Mucosa of descending colon (tissue), 3 donors: ENCODE measurements at regions of chr3 and their contacts with region 1.

Region 1: DNA sequence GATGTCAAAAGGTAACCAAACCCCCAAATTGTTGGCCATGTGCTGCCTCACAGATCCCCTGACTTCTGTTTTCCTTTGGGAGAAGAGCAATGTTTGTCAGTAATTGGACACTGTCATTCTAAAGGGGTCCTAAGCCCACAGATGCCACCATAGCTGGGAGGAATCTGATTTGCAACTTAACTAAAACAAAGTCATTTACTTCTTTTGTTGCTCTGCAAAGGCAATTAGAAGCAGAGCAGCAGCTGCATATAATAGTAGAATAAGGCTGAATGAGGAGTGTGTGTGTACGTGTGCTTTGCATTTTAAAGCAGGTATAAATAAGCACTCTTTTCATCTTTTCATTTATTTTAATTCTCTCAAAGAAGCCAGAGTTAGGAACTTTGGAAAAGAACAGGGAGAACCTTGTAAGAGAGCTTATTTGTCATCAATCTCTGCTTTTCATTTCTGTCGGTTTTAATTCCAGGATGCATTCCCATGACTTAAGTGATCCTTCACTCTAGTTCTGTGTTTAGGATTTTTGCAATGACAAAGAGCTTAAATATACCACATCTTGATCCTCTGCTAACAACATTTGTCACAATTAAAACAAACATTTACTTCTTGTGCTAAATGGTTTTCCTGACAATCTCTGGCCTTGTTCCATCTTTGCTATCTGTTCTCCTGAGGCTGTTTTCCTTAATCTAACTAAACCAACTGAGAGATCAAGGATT is 530.2 kb upstream of the CBLB start:
- DNase-seq: no peak
- ATAC-seq: no peak
- H3K4me3 ChIP-seq: no peak overlapping the region
- H3K4me1 ChIP-seq: no peaks in the 10 kb centered on the region
- CTCF ChIP-seq: no peak

Region 2: DNA sequence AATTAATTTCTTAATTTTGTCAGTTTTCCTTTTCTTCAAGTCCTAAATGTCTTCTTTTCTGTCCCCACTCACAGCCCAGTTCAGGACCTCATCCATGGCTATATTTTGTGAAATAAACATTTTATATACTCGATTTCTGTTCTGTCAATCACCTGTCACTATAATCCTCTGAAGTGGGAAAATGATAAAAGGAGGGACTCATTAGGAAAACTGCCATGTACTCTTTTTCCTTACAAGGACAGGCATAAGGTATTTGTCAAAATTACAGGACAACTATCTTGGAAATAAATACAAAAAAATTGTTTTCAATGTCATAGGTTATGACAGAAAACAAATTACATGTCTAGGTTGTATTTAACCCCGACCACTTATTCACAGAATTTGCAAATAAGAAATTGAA is 290.1 kb before region 1 on chr3:
- intact Hi-C with region 1: loop called in 1 of 2 experiments (anchors 5 kb)
- DNase-seq: no peak
- ATAC-seq: no peak
- H3K4me3 ChIP-seq: no peak overlapping the region
- H3K4me1 ChIP-seq: no peaks in the 10 kb centered on the region
- CTCF ChIP-seq: no peak

Region 3: GRCh38 chr3:106452096-106452495 is 53.0 kb after region 1 on chr3:
- intact Hi-C with region 1: no loop called
- DNase-seq: no peak
- ATAC-seq: no peak
- H3K4me3 ChIP-seq: no peak overlapping the region
- H3K4me1 ChIP-seq: no peaks in the 10 kb centered on the region
- CTCF ChIP-seq: no peak

Region 4: DNA sequence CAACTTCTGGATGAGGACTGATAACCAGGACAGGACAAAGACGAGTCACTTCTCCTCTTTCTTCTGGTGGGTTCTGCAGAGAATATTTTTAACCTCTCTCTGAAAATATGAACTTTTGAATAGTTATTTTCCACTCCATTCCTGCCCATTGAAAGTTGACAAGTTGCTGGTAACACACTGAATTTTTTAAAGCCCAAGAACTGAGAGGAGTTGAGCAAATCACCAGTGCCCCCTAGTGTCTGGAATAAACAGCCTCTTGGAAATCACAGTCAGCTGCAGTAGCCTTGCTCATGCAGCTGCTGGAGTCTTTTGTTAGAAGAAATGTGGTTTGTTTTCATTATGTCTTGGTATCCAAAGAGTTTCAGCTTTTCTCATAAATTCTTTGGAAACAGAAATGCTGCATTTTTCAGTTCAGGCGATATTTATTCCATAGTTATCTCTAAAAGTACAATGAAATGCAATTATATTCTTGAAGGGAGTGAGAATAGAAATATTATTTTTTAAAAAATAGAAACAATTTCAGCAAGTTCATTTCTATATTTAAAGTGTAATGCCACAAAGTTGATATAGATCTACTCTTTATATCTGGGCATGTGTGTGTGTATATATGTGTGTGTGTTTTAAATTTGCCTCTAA is 210.7 kb after region 1 on chr3:
- intact Hi-C with region 1: no loop called
- DNase-seq: peak in 2 of 3 donors; percentile 12 to 78
- ATAC-seq: peak; percentile 69
- H3K4me3 ChIP-seq: no peak overlapping the region
- H3K4me1 ChIP-seq: no peaks in the 10 kb centered on the region
- CTCF ChIP-seq: peak; percentile 48